Activated CD4-positive, alpha-beta T cell treated with anti-CD3 and anti-CD28 coated beads, Interleukin-2, amount 10 ng/mL, durations not matched to agents 24 days and 14 days (primary cell): ENCODE measurements at regions of chr10 and their contacts with region 1.

Region 1: DNA sequence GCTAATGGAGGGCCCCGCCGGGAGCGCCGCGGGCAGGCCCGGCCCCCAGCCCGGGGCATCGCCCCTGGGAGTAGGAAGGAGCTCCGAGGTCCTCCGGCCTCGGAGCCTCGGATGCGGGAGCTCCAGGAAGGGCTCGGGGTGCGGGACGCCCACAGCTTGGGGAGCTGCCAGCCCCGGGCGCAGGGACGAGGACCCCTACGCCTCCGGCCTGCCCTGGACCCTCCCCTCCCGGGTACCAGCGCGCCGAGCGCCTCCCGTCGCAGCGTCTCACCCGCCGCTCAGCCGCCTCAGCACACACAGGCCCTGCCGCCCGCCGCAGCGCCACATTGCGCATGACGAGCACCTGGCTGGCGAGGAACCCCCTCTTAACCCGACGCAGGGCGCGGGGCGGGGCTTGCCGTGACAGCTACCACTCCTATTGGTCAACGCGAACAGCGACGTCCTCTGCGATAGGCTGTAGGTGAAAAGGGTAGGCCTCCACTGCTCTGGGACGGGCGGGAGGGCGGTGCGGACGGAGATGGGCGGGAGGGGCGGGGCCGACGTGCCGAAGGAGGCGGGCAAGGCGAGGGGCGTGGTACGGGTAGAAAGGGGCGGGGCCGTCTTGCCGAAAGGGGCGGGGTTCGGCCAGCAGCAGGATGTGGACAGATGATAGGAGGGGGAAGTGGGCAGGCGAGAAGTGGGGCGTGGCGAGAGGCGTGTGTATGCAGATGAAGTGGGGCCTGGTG is at the start of gene PITRM1:
- DNase-seq: peak; percentile 100
- H3K4me3 Mint-ChIP-seq: peak within 1 kb of the TSS; percentile 85
- H3K27ac Mint-ChIP-seq: peak within 1 kb of the TSS; percentile 91
- H3K4me1 Mint-ChIP-seq: peaks cover 14% of the 10 kb centered on the region
- H3K27me3 Mint-ChIP-seq: peaks cover 22% of the 10 kb centered on the region
- total RNA-seq, gene PITRM1: 79.6 and 83.4 TPM in 2 replicates

Region 2: DNA sequence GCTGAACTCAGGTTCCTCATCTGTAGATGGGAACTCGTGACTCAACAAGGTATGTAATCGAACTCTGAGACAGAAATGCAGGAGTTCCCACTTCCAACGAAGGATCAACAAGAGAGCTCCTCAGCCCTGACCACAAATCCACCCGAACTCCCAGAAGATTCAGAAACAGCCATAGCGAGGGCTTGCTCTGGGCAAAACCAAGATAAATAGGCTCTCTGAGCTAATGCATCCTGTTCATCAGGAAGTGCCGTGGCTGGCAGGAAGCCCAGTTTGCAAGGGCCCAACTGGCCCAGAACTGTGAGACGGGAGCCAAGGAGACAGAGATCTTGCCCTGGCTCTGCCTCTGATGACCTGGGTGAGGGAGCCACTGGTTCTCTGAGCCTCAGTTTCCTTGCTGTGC is 247.0 kb before region 1 on chr10:
- intact Hi-C with region 1: no loop called
- DNase-seq: no peak
- H3K4me3 Mint-ChIP-seq: no peak overlapping the region
- H3K27ac Mint-ChIP-seq: no peak overlapping the region
- H3K4me1 Mint-ChIP-seq: peaks cover 9% of the 10 kb centered on the region
- H3K27me3 Mint-ChIP-seq: peaks cover 19% of the 10 kb centered on the region

Region 3: DNA sequence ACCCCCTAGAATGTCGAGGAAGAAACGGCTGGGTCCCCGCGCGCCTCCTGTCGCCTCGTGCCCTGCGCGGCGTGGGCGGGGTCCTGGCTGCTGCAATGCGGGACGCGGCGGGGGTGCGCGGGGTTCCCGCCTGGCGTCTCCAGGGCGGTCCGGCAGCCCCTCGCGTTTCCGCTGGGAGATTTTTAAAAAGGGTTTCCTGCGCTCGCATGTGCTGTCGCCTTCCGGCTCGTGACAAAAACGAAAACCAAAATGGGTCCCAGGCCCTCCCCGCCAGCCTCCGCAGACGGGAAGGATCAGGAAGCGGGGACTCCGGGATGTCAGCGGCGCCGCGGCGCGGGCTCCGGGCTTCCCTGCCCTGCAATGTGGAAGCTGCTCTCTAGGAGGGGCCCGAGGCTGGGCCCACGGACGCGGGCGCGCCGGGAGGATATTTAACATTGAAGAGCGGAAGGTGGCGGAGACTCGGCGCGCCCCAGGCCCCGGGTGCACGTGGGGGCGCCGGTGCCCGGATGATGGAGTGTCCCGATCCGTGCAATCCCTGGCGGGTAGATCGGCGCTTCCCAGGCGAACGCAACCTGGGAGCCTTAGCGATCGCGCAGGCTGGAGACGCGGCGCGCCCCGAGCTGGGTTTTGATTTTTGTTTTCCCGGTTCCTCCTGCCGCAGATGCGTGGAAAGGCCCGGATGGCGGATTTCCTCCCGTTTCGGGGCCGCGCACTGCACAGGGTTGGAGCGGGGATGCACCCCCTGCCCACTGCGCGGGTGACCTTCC is 104.2 kb before region 1 on chr10:
- intact Hi-C with region 1: loop called (anchors 1 kb)
- DNase-seq: peak; percentile 92
- H3K4me3 Mint-ChIP-seq: peak overlapping the region; percentile 93
- H3K27ac Mint-ChIP-seq: peak overlapping the region; percentile 95
- H3K4me1 Mint-ChIP-seq: peaks cover 36% of the 10 kb centered on the region
- H3K27me3 Mint-ChIP-seq: peaks cover 19% of the 10 kb centered on the region

Region 4: GRCh38 chr10:3095373-3096139 is 77.1 kb before region 1 on chr10:
- intact Hi-C with region 1: loop called (anchors 2 kb)
- DNase-seq: peak; percentile 85
- H3K4me3 Mint-ChIP-seq: peak overlapping the region; percentile 61
- H3K27ac Mint-ChIP-seq: peak overlapping the region; percentile 89
- H3K4me1 Mint-ChIP-seq: peaks cover 55% of the 10 kb centered on the region
- H3K27me3 Mint-ChIP-seq: no peaks in the 10 kb centered on the region

Region 5: GRCh38 chr10:3186368-3186767 is 13.8 kb after region 1 on chr10:
- intact Hi-C with region 1: loop called (anchors 1 kb)
- DNase-seq: peak; percentile 84
- H3K4me3 Mint-ChIP-seq: no peak overlapping the region
- H3K27ac Mint-ChIP-seq: peak overlapping the region; percentile 49
- H3K4me1 Mint-ChIP-seq: peaks cover 12% of the 10 kb centered on the region
- H3K27me3 Mint-ChIP-seq: peaks cover 64% of the 10 kb centered on the region

Region 6: DNA sequence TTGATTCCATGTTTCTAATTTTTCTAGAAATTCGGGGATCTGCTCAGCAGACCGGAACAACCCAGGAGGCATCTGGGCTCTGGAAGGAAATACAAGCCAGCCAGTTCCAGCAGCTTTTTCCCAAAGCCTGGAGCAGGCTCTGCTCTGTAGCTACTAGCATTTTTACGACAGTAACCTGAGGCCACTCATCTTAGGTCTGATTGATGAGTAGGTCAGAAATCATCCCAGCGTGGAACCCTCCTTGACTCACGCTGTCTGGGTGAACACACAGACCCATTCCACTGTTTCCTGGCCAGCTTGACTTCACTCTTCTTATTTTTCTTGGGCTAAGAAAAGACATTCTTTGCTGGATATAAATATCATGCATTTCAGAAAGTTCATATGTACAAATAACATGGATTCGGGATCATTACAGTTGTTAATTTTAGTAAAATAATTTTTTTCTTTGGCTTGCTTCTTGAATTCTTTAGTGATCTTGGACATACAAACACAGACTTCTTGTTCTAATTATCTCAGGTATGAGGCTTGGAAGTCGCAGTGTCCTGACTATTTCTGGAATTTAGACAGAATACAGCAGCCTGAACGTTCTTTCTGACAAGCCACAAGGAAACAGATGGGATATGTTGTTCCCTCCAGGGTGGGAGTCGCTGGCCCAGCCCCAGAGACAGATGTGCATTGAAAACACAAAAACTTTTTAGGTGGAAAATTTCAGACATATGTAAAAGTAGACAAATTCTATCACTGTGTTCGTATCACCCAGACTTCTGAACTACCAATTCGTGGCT is 54.5 kb after region 1 on chr10:
- intact Hi-C with region 1: no loop called
- DNase-seq: no peak
- H3K4me3 Mint-ChIP-seq: peak overlapping the region; percentile 51
- H3K27ac Mint-ChIP-seq: no peak overlapping the region
- H3K4me1 Mint-ChIP-seq: peaks cover 17% of the 10 kb centered on the region
- H3K27me3 Mint-ChIP-seq: peaks cover 22% of the 10 kb centered on the region

Region 7: DNA sequence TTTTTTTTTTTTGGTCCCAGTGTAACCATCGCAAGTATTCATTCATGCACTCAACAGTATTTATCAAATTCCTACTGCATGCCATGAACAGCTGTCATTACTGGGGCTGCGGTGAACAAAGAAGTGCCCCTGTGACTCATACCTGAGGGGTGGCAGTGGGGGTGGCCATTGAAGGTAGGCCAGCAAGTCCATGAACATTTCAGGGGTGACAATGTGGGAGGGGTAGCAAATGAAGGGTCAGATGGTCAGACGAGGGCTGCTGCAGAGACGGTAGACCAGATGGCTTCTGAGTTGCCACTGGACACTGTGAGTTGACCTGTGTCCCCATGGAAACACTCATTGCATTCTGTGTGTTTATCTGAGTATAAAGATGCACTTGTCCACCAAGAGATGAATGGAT is 92.5 kb after region 1 on chr10:
- intact Hi-C with region 1: no loop called
- DNase-seq: no peak
- H3K4me3 Mint-ChIP-seq: no peak overlapping the region
- H3K27ac Mint-ChIP-seq: no peak overlapping the region
- H3K4me1 Mint-ChIP-seq: peaks cover 2% of the 10 kb centered on the region
- H3K27me3 Mint-ChIP-seq: peaks cover 41% of the 10 kb centered on the region